ENCODE measurements at regions of chr4 and their contacts with region 1.

Region 1: DNA sequence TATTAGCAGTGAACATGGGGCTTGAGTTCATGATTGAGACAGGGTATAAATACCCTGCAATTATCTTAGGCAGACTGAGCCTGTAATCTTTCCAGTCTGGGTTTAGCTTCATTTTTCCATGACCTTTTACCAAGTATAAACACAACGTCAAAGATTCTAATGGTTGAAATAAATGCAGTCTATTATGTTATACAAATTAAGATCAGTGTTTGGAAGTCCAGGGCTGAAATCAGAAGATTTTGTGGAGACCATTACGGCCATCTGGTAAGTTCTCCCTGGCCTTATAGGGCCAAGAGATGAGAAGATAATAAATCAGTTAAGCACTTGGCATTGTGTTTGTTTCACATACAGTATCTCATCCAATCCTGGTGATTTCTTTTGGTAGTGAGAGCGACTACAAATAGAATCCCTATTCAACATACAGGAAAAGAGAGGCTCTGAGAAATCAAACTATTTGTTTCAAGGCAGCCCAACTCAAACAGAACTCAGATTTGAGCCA is 425.8 kb downstream of the PACRGL start:
- DNase-seq: no peak
- H3K4me3 ChIP-seq: no peak overlapping the region
- H3K27ac ChIP-seq: peak overlapping the region in 3 of 4 donors; percentile 40 to 70 (median 63)
- H3K4me1 ChIP-seq: peaks cover 0 to 34% (median 19%) of the 10 kb centered on the region in 4 donors
- H3K27me3 ChIP-seq: no peaks in the 10 kb centered on the region
- CTCF ChIP-seq: no peak
- EP300 ChIP-seq: no peak
- POLR2A ChIP-seq: no peak

Region 2: DNA sequence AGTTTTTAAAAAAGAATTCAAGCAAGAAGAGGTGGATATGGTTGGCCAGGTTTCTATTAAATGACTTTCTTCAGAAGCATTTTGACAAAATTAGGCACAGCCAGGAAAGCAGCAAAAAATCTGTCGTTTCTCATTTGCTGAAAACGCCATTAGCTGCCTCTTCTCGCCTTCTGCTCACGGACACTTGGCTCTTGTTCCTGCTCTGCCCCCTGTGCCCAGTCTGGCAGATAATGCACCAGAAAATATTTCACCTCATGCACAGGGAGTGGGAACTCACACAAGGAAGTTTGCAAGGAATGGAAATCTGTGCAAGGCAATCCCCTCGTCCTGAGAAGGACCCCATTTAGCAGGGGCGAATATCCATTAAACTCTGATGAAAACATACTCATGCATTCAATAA is 165.8 kb before region 1 on chr4:
- intact Hi-C with region 1: loop called (anchors 5 kb)
- DNase-seq: no peak
- H3K4me3 ChIP-seq: no peak overlapping the region
- H3K27ac ChIP-seq: peak overlapping the region in 2 of 4 donors; percentile 28 to 48
- H3K4me1 ChIP-seq: peaks cover 0 to 36% (median 27%) of the 10 kb centered on the region in 4 donors
- H3K27me3 ChIP-seq: no peaks in the 10 kb centered on the region
- CTCF ChIP-seq: no peak
- EP300 ChIP-seq: no peak
- POLR2A ChIP-seq: no peak

Region 3: GRCh38 chr4:20983763-20984575 is 142.1 kb before region 1 on chr4:
- intact Hi-C with region 1: loop called (anchors 5 kb)
- DNase-seq: peak; percentile 74
- H3K4me3 ChIP-seq: peak overlapping the region; percentile 45 to 55 (median 48)
- H3K27ac ChIP-seq: peak overlapping the region in 3 of 4 donors; percentile 65 to 80 (median 74)
- H3K4me1 ChIP-seq: peaks cover 0 to 29% (median 11%) of the 10 kb centered on the region in 4 donors
- H3K27me3 ChIP-seq: no peaks in the 10 kb centered on the region
- CTCF ChIP-seq: no peak
- EP300 ChIP-seq: no peak
- POLR2A ChIP-seq: no peak

Region 4: GRCh38 chr4:21090094-21090666 is 35.9 kb before region 1 on chr4:
- intact Hi-C with region 1: no loop called
- DNase-seq: no peak
- H3K4me3 ChIP-seq: no peak overlapping the region
- H3K27ac ChIP-seq: no peak overlapping the region
- H3K4me1 ChIP-seq: peaks cover 0 to 13% (median 3%) of the 10 kb centered on the region in 4 donors
- H3K27me3 ChIP-seq: no peaks in the 10 kb centered on the region
- CTCF ChIP-seq: no peak
- EP300 ChIP-seq: no peak
- POLR2A ChIP-seq: no peak

Region 5: DNA sequence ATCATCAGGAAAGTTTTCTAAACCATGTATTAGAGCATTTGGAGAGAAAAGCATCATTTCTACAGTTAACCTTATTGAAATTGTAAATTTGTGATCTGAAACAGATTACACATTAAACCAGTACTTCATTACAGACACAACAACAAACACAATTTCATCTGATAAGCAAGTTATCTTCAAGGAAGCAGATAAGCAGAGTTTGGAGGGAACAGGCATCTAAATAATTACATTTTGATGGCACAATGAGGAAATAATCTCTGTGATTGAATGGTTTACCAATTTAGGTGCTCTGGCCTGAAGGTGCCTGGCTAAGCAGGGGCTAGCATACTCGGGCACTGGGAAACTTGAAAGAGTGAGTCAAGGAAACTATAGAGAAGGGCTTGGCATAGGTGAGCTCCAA is 194.0 kb after region 1 on chr4:
- intact Hi-C with region 1: no loop called
- DNase-seq: no peak
- H3K4me3 ChIP-seq: no peak overlapping the region
- H3K27ac ChIP-seq: no peak overlapping the region
- H3K4me1 ChIP-seq: no peaks in the 10 kb centered on the region
- H3K27me3 ChIP-seq: no peaks in the 10 kb centered on the region
- CTCF ChIP-seq: no peak
- EP300 ChIP-seq: no peak
- POLR2A ChIP-seq: no peak